Activated T-helper 1 cell treated with anti-CD3 and anti-CD28 coated beads, Interleukin-12 subunit alpha, Interleukin-12 subunit beta, Interleukin-2, Interleukin-4 antibody, amounts not matched to agents 30 ng/mL and 10 ng/mL and 1 ng/mL, durations not matched to agents 14 hours and 24 hours and 36 hours (primary cell): ENCODE measurements at regions of chr21 and their contacts with region 1.

Region 1: GRCh38 chr21:31509194-31510017 is 150.1 kb upstream of the SOD1 start:
- DNase-seq: peak; percentile 83
- H3K4me3 Mint-ChIP-seq: peak overlapping the region; percentile 45
- H3K27ac Mint-ChIP-seq: peak overlapping the region; percentile 73
- H3K4me1 Mint-ChIP-seq: peaks cover 51% of the 10 kb centered on the region
- H3K27me3 Mint-ChIP-seq: peaks cover 32% of the 10 kb centered on the region

Region 2: GRCh38 chr21:31008340-31008739 is 501.1 kb before region 1 on chr21:
- intact Hi-C with region 1: no loop called
- DNase-seq: no peak
- H3K4me3 Mint-ChIP-seq: no peak overlapping the region
- H3K27ac Mint-ChIP-seq: no peak overlapping the region
- H3K4me1 Mint-ChIP-seq: peaks cover 32% of the 10 kb centered on the region
- H3K27me3 Mint-ChIP-seq: peaks cover 19% of the 10 kb centered on the region

Region 3: GRCh38 chr21:31098576-31099005 is 410.8 kb before region 1 on chr21:
- intact Hi-C with region 1: loop called (anchors 1 kb)
- DNase-seq: peak; percentile 57
- H3K4me3 Mint-ChIP-seq: no peak overlapping the region
- H3K27ac Mint-ChIP-seq: no peak overlapping the region
- H3K4me1 Mint-ChIP-seq: peaks cover 25% of the 10 kb centered on the region
- H3K27me3 Mint-ChIP-seq: peaks cover 17% of the 10 kb centered on the region

Region 4: DNA sequence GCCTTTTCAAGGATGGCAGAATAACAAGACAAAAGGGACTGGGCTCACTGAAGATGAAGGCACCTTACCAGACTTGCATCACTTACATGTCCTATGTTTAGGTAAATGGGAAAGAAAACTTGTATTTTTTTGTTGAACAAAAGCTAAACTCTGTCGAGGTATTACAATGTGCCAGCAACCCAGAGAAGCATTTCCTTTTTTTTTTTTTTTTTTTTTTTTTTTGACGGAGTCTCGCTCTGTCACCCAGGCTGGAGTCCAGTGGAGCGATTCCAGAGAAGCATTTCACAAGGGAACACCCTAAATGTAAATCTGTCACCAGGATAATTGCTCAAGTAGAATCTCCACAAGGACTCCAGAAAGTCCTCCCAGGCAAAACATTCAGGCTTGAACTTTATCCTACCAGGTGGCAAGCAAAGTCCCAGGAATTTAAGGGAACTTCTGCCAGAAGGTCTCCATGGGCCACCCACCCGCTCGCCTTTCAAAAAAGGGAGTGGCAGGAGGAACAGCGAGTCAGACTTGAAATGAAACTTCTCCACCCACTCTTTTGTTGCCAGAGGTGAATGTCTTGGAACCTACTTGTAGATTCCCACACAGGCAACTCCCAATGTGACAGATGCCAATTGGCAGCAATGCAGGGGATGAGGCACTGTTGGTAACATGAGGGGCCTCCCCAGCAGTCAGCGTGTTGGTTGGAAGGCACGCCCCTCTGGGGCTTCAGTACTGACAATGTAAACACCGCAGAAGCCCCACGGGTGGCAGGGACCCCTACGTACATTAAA is 290.4 kb before region 1 on chr21:
- intact Hi-C with region 1: loop called (anchors 5 kb)
- DNase-seq: no peak
- H3K4me3 Mint-ChIP-seq: no peak overlapping the region
- H3K27ac Mint-ChIP-seq: peak overlapping the region; percentile 76
- H3K4me1 Mint-ChIP-seq: peaks cover 14% of the 10 kb centered on the region
- H3K27me3 Mint-ChIP-seq: no peaks in the 10 kb centered on the region

Region 5: GRCh38 chr21:31326522-31327242 is 182.7 kb before region 1 on chr21:
- intact Hi-C with region 1: loop called (anchors 1 kb)
- DNase-seq: peak; percentile 37
- H3K4me3 Mint-ChIP-seq: peak overlapping the region; percentile 37
- H3K27ac Mint-ChIP-seq: peak overlapping the region; percentile 82
- H3K4me1 Mint-ChIP-seq: peaks cover 43% of the 10 kb centered on the region
- H3K27me3 Mint-ChIP-seq: no peaks in the 10 kb centered on the region

Region 6: GRCh38 chr21:31426235-31426797 is 83.1 kb before region 1 on chr21:
- intact Hi-C with region 1: loop called (anchors 1 kb)
- DNase-seq: peak; percentile 2
- H3K4me3 Mint-ChIP-seq: peak overlapping the region; percentile 50
- H3K27ac Mint-ChIP-seq: peak overlapping the region; percentile 64
- H3K4me1 Mint-ChIP-seq: peaks cover 16% of the 10 kb centered on the region
- H3K27me3 Mint-ChIP-seq: peaks cover 10% of the 10 kb centered on the region

Region 7: GRCh38 chr21:31446226-31446855 is 63.1 kb before region 1 on chr21:
- intact Hi-C with region 1: loop called (anchors 5 kb)
- DNase-seq: peak; percentile 49
- H3K4me3 Mint-ChIP-seq: peak overlapping the region; percentile 68
- H3K27ac Mint-ChIP-seq: peak overlapping the region; percentile 91
- H3K4me1 Mint-ChIP-seq: peaks cover 47% of the 10 kb centered on the region
- H3K27me3 Mint-ChIP-seq: peaks cover 6% of the 10 kb centered on the region

Region 8: GRCh38 chr21:31683030-31683429 is 173.6 kb after region 1 on chr21:
- intact Hi-C with region 1: no loop called
- DNase-seq: no peak
- H3K4me3 Mint-ChIP-seq: no peak overlapping the region
- H3K27ac Mint-ChIP-seq: no peak overlapping the region
- H3K4me1 Mint-ChIP-seq: no peaks in the 10 kb centered on the region
- H3K27me3 Mint-ChIP-seq: no peaks in the 10 kb centered on the region

Region 9: DNA sequence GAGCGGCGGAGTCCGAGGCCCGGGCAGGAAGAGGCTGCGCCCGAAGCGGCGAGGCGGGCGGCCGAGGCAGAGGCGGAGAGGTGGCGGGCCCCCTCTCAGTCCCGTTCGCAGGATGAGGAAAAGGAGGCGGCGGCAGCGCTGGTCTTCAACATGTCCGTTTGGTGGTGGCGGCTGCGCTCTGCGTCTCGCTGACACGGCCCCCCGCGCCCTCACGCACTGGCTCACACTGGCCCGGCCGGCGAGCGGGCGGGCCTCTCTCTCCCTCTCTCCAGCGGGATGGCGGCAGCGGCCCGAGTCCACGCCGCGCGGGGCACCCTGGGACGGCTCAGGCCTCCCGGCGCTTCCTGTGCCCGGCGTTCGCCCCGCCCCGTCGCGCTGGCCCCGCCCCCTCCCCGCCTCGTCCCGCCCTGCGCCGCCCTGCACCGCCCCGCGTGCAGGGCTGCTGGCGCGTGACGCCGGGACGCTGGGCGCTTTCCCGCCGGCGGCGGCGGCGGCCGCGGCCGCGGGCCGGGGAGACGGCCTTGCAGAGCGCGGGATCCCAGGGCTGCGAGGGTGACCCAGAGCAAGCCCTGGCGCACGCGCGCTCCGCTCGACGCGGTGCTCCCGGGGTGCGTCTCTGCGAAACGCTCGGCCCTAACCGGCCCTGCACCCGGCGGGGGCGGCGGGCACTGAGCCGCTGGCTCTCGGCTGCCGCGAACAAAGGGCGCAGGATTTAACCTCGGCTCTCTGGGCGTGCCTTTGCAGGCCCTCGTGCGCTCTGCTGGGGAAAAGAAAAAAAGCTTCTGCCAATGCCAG is 222.6 kb after region 1 on chr21 and contains the start of gene SCAF4:
- intact Hi-C with region 1: loop called (anchors 5 kb)
- DNase-seq: peak; percentile 78
- H3K4me3 Mint-ChIP-seq: no peak within 1 kb of the TSS
- H3K27ac Mint-ChIP-seq: peak within 1 kb of the TSS; percentile 79
- H3K4me1 Mint-ChIP-seq: no peaks in the 10 kb centered on the region
- H3K27me3 Mint-ChIP-seq: no peaks in the 10 kb centered on the region
- total RNA-seq, gene SCAF4: 66.1 and 70.6 TPM in 2 replicates